ENCODE measurements at regions of chr4 and their contacts with region 1.

Region 1: DNA sequence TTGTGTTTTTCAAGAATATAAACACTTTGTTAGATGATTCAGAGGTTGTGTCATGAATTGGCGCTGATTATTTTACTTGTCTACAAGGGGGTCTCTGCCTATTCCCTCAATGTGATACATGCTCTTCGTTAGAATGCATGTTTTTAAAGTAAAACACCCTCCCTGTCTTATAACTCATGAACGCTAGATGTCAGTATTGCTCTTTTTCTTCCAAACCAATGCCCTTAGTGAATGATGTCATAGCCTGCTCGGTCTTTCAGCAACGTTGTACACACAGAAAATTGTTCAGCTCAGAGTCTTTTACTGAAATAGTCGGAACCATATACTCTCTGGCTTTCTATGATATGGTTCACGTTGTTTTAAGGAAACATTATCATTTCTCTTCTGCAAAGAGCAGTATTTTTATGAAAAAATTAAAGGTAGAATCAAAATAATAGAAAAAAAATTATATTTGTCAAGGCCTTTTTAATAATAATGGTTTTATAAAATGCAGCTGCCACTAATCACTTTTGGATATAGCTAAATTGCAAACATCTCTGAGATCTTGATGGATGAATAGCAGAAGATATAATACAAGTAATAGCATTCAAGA is 292.9 kb downstream of the TLL1 start:
- DNase-seq: peak; percentile 81
- H3K4me3 ChIP-seq: no peak overlapping the region
- H3K27ac ChIP-seq: no peak overlapping the region
- H3K4me1 ChIP-seq: no peaks in the 10 kb centered on the region
- H3K27me3 ChIP-seq: no peaks in the 10 kb centered on the region

Region 2: GRCh38 chr4:165838575-165838974 is 327.4 kb before region 1 on chr4:
- in situ Hi-C with region 1: no loop called
- DNase-seq: no peak
- H3K4me3 ChIP-seq: no peak overlapping the region
- H3K27ac ChIP-seq: no peak overlapping the region
- H3K4me1 ChIP-seq: no peaks in the 10 kb centered on the region
- H3K27me3 ChIP-seq: no peaks in the 10 kb centered on the region

Region 3: GRCh38 chr4:167642250-167642649 is 1476.3 kb after region 1 on chr4:
- in situ Hi-C with region 1: loop called (anchors 25 kb)
- DNase-seq: no peak
- H3K4me3 ChIP-seq: no peak overlapping the region
- H3K27ac ChIP-seq: no peak overlapping the region
- H3K4me1 ChIP-seq: no peaks in the 10 kb centered on the region
- H3K27me3 ChIP-seq: no peaks in the 10 kb centered on the region

Region 4: DNA sequence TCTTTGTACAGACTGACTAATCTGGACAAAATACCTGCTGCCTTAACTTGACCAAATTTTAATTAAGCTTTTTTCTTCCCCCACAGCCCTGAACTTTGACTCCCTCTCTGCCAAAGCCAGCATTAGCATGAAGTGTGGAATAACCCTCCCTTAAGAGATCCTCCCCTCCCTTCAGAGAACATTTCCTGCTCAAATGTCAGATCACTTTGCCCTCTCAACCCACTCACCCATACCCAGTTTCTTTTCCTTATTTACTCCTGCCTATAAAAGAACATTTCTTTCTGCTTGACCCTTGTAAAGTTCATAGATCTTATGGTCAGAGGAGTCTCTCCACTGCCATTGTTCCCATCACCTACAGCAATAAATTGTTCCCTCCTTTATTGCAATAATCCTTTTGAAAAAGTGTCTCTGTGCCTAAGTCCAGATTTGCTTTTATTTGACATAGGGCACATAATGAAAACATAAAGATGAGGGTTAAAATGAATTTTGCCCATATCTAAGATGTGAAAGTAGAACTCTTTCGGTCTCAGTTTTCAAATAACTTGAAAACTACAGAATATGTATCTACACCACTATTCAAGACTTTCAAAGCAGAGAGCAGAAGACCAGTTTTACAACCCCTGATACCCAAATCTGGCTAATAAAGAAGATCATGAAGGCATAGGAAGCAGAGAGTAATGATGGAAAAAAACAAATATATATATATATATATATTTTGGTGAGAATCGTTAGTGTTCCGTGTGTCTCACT is 1636.7 kb after region 1 on chr4:
- in situ Hi-C with region 1: no loop called
- DNase-seq: no peak
- H3K4me3 ChIP-seq: no peak overlapping the region
- H3K27ac ChIP-seq: no peak overlapping the region
- H3K4me1 ChIP-seq: no peaks in the 10 kb centered on the region
- H3K27me3 ChIP-seq: no peaks in the 10 kb centered on the region

Region 5: GRCh38 chr4:168057412-168057811 is 1891.5 kb after region 1 on chr4:
- in situ Hi-C with region 1: loop called (anchors 25 kb)
- DNase-seq: no peak
- H3K4me3 ChIP-seq: no peak overlapping the region
- H3K27ac ChIP-seq: no peak overlapping the region
- H3K4me1 ChIP-seq: 0 out of 2 replicates have a peak, but pooled peaks cover 10% of the 10 kb centered on the region
- H3K27me3 ChIP-seq: peaks cover 18% of the 10 kb centered on the region

Measured in GM23248 (cell line).